PC-3 (cell line): ENCODE measurements at regions of chr3 and their contacts with region 1.

Region 1: GRCh38 chr3:100702082-100702979 is 7.0 kb upstream of the TFG start:
- DNase-seq: no peak
- ATAC-seq: no peak
- H3K4me3 ChIP-seq: no peak overlapping the region
- H3K27ac ChIP-seq: no peak overlapping the region
- H3K4me1 ChIP-seq: peaks cover 7% of the 10 kb centered on the region; the same call in 1 of the 2 replicates
- H3K27me3 ChIP-seq: no peaks in the 10 kb centered on the region
- CTCF ChIP-seq: no peak

Region 2: GRCh38 chr3:99817437-99818240 is 884.7 kb before region 1 on chr3 and contains the start of gene CMSS1:
- CTCF ChIA-PET with region 1: no interaction called
- POLR2A ChIA-PET with region 1: no interaction called
- intact Hi-C with region 1: loop called (anchors 5 kb)
- DNase-seq: peak; percentile 93
- ATAC-seq: peak; percentile 93
- H3K4me3 ChIP-seq: peak within 1 kb of the TSS; percentile 86
- H3K27ac ChIP-seq: peak within 1 kb of the TSS; percentile 69
- H3K4me1 ChIP-seq: peaks cover 20% of the 10 kb centered on the region
- H3K27me3 ChIP-seq: no peaks in the 10 kb centered on the region
- CTCF ChIP-seq: 0 out of 2 replicates have a peak, but pooled peaks have one; percentile 28
- total RNA-seq, gene CMSS1: 51.7 and 63.1 TPM in 2 replicates